Activated CD4-positive, alpha-beta memory T cell treated with anti-CD3 and anti-CD28 coated beads for 36 hours (primary cell): ENCODE measurements at regions of chr10 and their contacts with region 1.

Region 1: DNA sequence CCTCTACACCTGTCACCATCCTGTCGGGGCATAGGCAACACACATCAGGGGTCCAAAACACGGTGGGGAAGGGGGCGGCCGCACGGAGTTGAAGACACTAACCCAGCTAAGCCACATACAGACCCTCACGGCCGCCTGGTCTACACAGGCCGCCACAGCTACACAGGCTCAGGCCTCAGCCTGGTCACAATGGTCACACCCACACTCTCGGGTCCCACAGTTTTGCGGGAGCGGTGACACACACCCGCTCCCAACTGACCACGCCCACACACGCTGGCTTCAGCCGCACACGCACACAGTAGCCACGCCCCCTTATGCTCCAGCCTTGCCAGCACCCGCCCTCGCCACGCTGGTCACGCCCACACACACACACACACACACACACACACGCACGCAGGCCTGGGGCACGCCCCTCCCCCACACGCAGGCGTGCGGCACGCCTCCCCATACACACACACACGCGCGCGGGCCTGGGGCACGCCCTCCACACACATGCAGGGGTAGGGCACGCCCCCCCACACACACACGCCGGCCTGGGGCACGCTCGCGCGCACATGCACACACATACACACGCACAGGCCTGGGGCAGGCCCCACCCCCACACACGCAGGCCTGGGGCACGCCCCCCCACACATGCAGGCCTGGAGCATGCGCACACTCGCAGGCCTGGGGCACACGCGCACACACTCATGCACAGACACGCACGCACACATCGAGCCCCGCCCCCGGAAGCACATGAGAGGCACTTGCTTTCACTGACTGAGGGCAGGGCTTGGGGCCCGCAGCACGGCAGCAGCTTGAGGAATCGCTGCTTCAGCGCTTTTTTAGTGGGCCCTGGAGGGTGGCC is 12.3 kb upstream of the OGA start:
- DNase-seq: peak; percentile 93
- H3K4me3 Mint-ChIP-seq: peak overlapping the region; percentile 75
- H3K27ac Mint-ChIP-seq: peak overlapping the region; percentile 86
- H3K4me1 Mint-ChIP-seq: peaks cover 52% of the 10 kb centered on the region
- H3K27me3 Mint-ChIP-seq: no peaks in the 10 kb centered on the region

Region 2: DNA sequence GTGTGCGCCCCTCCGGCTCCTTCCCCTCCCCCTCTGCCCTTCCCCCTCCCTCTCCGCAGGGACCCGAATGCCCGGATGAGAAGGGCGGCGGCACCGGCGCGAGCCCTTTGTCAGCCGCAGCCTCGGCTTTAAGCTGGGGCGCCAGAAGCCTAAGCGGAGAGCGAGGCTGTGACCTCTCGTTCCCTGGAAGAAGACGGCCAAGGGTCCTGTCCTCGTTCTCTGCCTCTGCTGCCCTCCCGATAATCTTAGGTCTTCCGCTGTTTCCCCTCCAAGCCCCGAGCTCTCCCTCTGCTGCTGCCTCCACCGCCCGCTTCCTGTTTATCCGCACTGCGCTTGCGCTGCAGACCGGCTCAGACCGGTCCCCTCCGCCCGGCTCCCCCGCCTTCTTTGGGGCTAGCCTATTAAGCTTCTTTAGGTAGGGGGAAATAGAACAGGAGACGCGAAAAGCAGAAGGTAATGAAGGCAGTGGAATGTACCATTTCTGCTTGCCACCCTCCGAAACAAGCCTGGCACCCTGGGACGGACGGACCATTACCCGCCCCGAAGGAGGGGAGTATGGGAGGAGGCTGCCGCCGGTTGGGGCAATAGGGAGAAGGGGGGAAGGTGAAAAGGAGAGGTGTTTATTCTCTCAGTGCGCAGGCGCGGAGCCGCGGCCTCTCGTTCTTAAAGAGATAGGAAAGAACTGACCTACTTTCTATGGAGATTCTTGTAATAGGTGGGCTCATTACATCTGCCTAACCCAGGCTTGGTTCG is 12.2 kb before region 1 on chr10 and contains the start of gene OGA:
- CTCF ChIA-PET with region 1: interaction called, 42 read pairs
- POLR2A ChIA-PET with region 1: interaction called, 40 read pairs
- intact Hi-C with region 1: loop called (anchors 1 kb)
- DNase-seq: peak; percentile 99
- H3K4me3 Mint-ChIP-seq: peak within 1 kb of the TSS; percentile 97
- H3K27ac Mint-ChIP-seq: peak within 1 kb of the TSS; percentile 97
- H3K4me1 Mint-ChIP-seq: peaks cover 39% of the 10 kb centered on the region
- H3K27me3 Mint-ChIP-seq: no peaks in the 10 kb centered on the region
- total RNA-seq, gene OGA: 93.2 to 105 TPM

Region 3: GRCh38 chr10:102132563-102133372 is 302.2 kb after region 1 on chr10 and contains the start of gene PPRC1:
- CTCF ChIA-PET with region 1: no interaction called
- POLR2A ChIA-PET with region 1: no interaction called
- intact Hi-C with region 1: loop called (anchors 5 kb)
- DNase-seq: peak; percentile 99
- H3K4me3 Mint-ChIP-seq: peak within 1 kb of the TSS; percentile 100
- H3K27ac Mint-ChIP-seq: peak within 1 kb of the TSS; percentile 98
- H3K4me1 Mint-ChIP-seq: peaks cover 42% of the 10 kb centered on the region
- H3K27me3 Mint-ChIP-seq: no peaks in the 10 kb centered on the region
- total RNA-seq, gene PPRC1: 59.1 to 65.9 TPM